ENCODE measurements at regions of chr4 and their contacts with region 1.

Region 1: GRCh38 chr4:29326816-29327215 is 1393.4 kb upstream of the PCDH7 start:
- DNase-seq: peak; percentile 97
- H3K4me3 ChIP-seq: no peak overlapping the region
- H3K27ac ChIP-seq: peak overlapping the region; percentile 89
- H3K4me1 ChIP-seq: peaks cover 18% of the 10 kb centered on the region
- H3K27me3 ChIP-seq: no peaks in the 10 kb centered on the region
- CTCF ChIP-seq: no peak
- POLR2A ChIP-seq: no peak

Region 2: GRCh38 chr4:29081234-29081955 is 245.4 kb before region 1 on chr4:
- CTCF ChIA-PET with region 1: no interaction called
- POLR2A ChIA-PET with region 1: no interaction called
- dilution Hi-C with region 1: no loop called
- intact Hi-C with region 1: loop called (anchors 1 kb)
- DNase-seq: peak; percentile 65
- H3K4me3 ChIP-seq: no peak overlapping the region
- H3K27ac ChIP-seq: no peak overlapping the region
- H3K4me1 ChIP-seq: no peaks in the 10 kb centered on the region
- H3K27me3 ChIP-seq: no peaks in the 10 kb centered on the region
- CTCF ChIP-seq: peak; percentile 26
- POLR2A ChIP-seq: no peak

Region 3: DNA sequence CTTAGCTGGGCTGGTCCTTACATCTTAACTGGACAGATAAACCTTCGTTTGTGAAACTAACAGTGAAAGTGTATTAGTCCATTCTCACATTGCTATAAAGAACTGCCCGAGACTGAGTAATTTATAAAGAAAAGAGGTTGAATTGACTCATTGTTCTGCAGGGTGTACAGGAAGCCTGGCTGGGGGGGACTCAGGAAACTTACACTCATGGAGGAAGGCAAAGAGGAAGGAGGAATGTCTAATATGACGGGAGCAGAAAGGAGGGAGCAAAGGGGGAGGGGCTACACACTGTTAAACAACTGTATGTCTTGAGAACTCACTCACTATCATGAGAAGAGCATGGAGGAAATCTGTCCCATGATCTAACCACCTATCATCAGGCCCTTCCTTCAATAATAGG is 173.2 kb before region 1 on chr4:
- CTCF ChIA-PET with region 1: no interaction called
- POLR2A ChIA-PET with region 1: no interaction called
- dilution Hi-C with region 1: no loop called
- intact Hi-C with region 1: loop called (anchors 1 kb)
- DNase-seq: peak; percentile 97
- H3K4me3 ChIP-seq: peak overlapping the region in 1 of 3 experiments; percentile 50
- H3K27ac ChIP-seq: peak overlapping the region; percentile 90
- H3K4me1 ChIP-seq: peaks cover 16% of the 10 kb centered on the region
- H3K27me3 ChIP-seq: no peaks in the 10 kb centered on the region
- CTCF ChIP-seq: no peak
- POLR2A ChIP-seq: no peak

Region 4: DNA sequence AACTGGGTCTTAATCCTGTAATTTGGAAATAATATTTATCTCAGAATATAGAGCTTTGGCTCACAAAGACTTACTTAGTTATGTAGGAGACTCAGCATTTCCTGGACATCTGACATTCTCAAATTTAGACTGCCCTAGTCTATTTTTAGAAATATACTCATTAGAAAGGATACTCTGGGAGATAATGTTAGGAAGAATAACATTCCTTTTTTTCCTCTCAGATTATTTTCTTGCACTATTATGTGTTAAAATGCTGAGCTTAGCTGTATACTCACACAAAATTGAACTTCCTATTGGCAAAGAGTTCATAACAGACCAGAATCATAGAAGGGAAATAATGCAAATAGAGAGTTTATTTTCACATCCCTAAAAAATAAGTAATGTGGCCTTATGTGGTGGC is 31.5 kb before region 1 on chr4:
- CTCF ChIA-PET with region 1: no interaction called
- POLR2A ChIA-PET with region 1: no interaction called
- dilution Hi-C with region 1: no loop called
- intact Hi-C with region 1: no loop called
- DNase-seq: peak; percentile 10
- H3K4me3 ChIP-seq: no peak overlapping the region
- H3K27ac ChIP-seq: no peak overlapping the region
- H3K4me1 ChIP-seq: peaks cover 7% of the 10 kb centered on the region
- H3K27me3 ChIP-seq: no peaks in the 10 kb centered on the region
- CTCF ChIP-seq: no peak
- POLR2A ChIP-seq: no peak

Region 5: DNA sequence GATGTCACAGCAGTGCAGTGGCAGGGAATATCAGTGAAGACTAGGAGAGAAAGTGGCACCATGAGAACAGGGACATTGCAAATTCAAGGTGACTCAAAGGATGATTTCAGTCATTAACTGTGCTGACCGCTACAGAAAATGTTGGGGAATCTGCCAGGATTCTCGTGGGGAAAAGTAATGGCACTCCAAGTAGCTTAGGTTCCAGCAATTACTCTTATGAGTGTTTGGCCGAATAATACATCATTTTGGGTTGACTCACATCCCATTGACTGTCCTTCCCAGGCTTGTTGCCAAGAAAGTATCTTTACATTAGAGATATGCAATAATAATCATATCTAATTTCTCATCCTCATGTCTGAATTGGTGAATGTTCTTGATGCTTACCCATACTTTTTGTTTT is 17.8 kb before region 1 on chr4:
- CTCF ChIA-PET with region 1: interaction called, 3 read pairs
- POLR2A ChIA-PET with region 1: no interaction called
- dilution Hi-C with region 1: no loop called
- intact Hi-C with region 1: loop called (anchors 1 kb)
- DNase-seq: peak; percentile 70
- H3K4me3 ChIP-seq: no peak overlapping the region
- H3K27ac ChIP-seq: peak overlapping the region; percentile 78
- H3K4me1 ChIP-seq: peaks cover 45% of the 10 kb centered on the region
- H3K27me3 ChIP-seq: no peaks in the 10 kb centered on the region
- CTCF ChIP-seq: no peak
- POLR2A ChIP-seq: no peak

Region 6: DNA sequence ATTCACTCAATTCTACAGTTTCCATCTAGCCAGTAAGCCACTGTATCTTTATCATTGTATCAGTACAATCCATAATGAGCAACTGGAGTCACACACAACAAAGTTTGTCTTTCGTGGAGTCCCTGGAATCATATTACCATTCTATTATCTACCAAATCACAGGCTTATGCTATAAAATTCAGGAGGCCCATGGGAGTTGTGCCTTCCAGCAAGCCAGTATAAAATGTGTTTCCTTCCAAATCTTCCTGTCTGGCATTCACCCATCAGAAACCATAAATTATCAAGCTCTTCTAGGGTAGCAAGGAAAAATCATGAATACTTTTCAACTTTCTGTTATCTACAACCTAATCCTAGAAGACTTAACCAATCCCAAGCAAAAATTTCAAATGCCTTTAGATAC is 10.0 kb after region 1 on chr4:
- CTCF ChIA-PET with region 1: interaction called, 4 read pairs
- POLR2A ChIA-PET with region 1: no interaction called
- dilution Hi-C with region 1: no loop called
- intact Hi-C with region 1: loop called (anchors 1 kb)
- DNase-seq: peak; percentile 95
- H3K4me3 ChIP-seq: no peak overlapping the region
- H3K27ac ChIP-seq: no peak overlapping the region
- H3K4me1 ChIP-seq: peaks cover 2% of the 10 kb centered on the region
- H3K27me3 ChIP-seq: no peaks in the 10 kb centered on the region
- CTCF ChIP-seq: no peak
- POLR2A ChIP-seq: no peak

Measured in endothelial cell of umbilical vein (primary cell).